ENCODE measurements at regions of chr2 and their contacts with region 1.

Region 1: DNA sequence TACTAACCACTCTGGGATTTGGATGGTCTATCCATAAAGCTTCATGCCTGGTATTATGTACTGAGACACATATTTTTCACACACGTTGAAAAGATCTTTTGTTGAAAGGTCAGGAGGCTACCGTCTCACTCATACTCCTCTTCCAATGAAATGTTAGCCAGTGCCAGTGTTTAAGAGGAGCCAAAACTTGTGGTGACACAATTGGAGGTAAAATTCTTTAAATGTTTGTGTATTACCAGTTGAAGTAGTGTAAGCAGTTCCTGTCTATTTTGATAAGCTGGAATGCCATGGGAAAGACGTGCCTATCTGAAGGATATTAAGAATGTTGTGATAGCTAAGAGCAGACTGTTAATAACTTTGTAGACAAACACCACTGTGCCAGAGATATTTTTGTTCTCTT is 32.1 kb downstream of the MARCHF7 start:
- DNase-seq: no peak
- H3K4me3 Mint-ChIP-seq: no peak overlapping the region
- H3K27ac Mint-ChIP-seq: no peak overlapping the region
- H3K4me1 Mint-ChIP-seq: peaks cover 7% of the 10 kb centered on the region
- H3K27me3 Mint-ChIP-seq: no peaks in the 10 kb centered on the region

Region 2: DNA sequence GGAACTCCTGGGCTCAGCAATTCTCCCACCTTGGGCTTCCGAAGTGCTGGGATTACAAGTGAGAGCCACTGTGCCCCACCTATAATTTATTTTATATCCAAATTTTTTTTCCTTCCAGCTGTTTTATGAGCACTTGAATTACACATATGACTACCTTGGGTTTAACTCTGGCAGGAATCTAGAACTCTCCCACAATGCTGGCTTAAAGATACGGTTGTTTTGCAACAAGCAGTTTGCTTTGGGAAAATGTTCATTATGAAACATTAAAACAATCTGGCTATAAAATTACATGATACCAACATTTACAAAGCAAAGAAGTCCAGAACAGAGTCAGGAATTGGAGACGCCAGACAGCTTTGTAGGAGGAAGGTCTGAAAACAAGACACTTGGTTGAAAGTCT is 40.8 kb after region 1 on chr2:
- intact Hi-C with region 1: loop called (anchors 1 kb)
- DNase-seq: no peak
- H3K4me3 Mint-ChIP-seq: no peak overlapping the region
- H3K27ac Mint-ChIP-seq: no peak overlapping the region
- H3K4me1 Mint-ChIP-seq: peaks cover 3% of the 10 kb centered on the region
- H3K27me3 Mint-ChIP-seq: peaks cover 3% of the 10 kb centered on the region

Region 3: GRCh38 chr2:159795841-159796690 is 51.7 kb after region 1 on chr2:
- intact Hi-C with region 1: no loop called
- DNase-seq: no peak
- H3K4me3 Mint-ChIP-seq: no peak overlapping the region
- H3K27ac Mint-ChIP-seq: no peak overlapping the region
- H3K4me1 Mint-ChIP-seq: peaks cover 8% of the 10 kb centered on the region
- H3K27me3 Mint-ChIP-seq: peaks cover 48% of the 10 kb centered on the region